Activated T-helper 2 cell treated with anti-CD3 and anti-CD28 coated beads, Interferon-gamma antibody, Interleukin-2, Interleukin-4, amounts not matched to agents 10 μg/mL and 5 μg/mL and 100 μg/mL, durations not matched to agents 14 hours and 24 hours and 36 hours (primary cell): ENCODE measurements at regions of chr3 and their contacts with region 1.

Region 1: GRCh38 chr3:32177702-32178198 is 60.7 kb upstream of the CMTM8 start:
- DNase-seq: peak; percentile 36
- H3K4me3 Mint-ChIP-seq: no peak overlapping the region
- H3K27ac Mint-ChIP-seq: no peak overlapping the region
- H3K4me1 Mint-ChIP-seq: peaks cover 15% of the 10 kb centered on the region
- H3K27me3 Mint-ChIP-seq: peaks cover 14% of the 10 kb centered on the region

Region 2: GRCh38 chr3:32026593-32026992 is 151.2 kb before region 1 on chr3:
- intact Hi-C with region 1: no loop called
- DNase-seq: no peak
- H3K4me3 Mint-ChIP-seq: no peak overlapping the region
- H3K27ac Mint-ChIP-seq: no peak overlapping the region
- H3K4me1 Mint-ChIP-seq: no peaks in the 10 kb centered on the region
- H3K27me3 Mint-ChIP-seq: peaks cover 9% of the 10 kb centered on the region

Region 3: DNA sequence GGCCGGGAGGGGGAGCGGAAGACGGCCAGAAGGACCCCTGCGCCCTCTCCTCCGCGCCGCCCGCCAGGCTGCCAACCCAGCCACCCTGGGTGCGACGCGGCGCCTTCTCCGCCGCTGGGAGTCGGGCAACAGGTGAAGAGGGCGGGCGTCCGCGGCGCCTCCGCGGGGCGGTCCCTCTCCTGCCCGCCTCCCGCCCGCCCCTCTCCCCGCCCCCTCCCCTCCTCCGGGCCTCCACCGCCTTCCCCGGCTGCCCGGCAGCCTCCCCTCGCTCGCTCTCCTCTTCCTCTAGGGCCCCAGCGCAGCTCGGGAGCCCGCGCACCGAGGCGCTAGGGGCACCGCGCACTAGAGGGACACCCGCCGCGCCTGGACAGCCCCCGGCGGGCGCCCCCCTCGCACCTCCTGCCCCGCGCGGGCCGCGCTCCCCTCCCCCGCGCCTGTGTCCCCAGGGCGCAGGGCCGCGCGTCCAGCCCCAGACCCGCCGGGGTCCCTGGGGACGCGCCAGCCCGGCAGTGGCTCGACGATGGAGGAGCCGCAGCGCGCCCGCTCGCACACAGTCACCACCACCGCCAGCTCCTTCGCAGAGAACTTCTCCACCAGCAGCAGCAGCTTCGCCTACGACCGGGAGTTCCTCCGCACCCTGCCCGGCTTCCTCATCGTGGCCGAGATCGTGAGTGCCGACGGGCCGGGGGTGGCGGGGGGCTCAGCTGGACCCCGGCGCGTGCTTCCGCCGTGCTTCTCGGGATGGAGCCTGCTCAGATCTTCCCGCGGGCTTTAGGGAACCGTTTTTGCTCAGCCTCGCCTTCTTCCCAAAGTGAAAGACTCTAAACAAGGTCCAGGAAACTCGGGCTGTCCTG is 60.9 kb after region 1 on chr3 and contains the start of gene CMTM8:
- intact Hi-C with region 1: loop called (anchors 2 kb)
- DNase-seq: peak; percentile 54
- H3K4me3 Mint-ChIP-seq: peak within 1 kb of the TSS; percentile 81
- H3K27ac Mint-ChIP-seq: peak within 1 kb of the TSS; percentile 26
- H3K4me1 Mint-ChIP-seq: peaks cover 19% of the 10 kb centered on the region
- H3K27me3 Mint-ChIP-seq: peaks cover 34% of the 10 kb centered on the region
- total RNA-seq, gene CMTM8: 3.6 TPM in 2 replicates

Region 4: GRCh38 chr3:32334675-32335074 is 156.9 kb after region 1 on chr3:
- intact Hi-C with region 1: loop called (anchors 1 kb)
- DNase-seq: peak; percentile 33
- H3K4me3 Mint-ChIP-seq: no peak overlapping the region
- H3K27ac Mint-ChIP-seq: no peak overlapping the region
- H3K4me1 Mint-ChIP-seq: peaks cover 24% of the 10 kb centered on the region
- H3K27me3 Mint-ChIP-seq: no peaks in the 10 kb centered on the region

Region 5: GRCh38 chr3:32401556-32402081 is 223.9 kb after region 1 on chr3:
- intact Hi-C with region 1: loop called (anchors 1 kb)
- DNase-seq: peak; percentile 51
- H3K4me3 Mint-ChIP-seq: peak overlapping the region; percentile 89
- H3K27ac Mint-ChIP-seq: peak overlapping the region; percentile 98
- H3K4me1 Mint-ChIP-seq: peaks cover 53% of the 10 kb centered on the region
- H3K27me3 Mint-ChIP-seq: no peaks in the 10 kb centered on the region

Region 6: DNA sequence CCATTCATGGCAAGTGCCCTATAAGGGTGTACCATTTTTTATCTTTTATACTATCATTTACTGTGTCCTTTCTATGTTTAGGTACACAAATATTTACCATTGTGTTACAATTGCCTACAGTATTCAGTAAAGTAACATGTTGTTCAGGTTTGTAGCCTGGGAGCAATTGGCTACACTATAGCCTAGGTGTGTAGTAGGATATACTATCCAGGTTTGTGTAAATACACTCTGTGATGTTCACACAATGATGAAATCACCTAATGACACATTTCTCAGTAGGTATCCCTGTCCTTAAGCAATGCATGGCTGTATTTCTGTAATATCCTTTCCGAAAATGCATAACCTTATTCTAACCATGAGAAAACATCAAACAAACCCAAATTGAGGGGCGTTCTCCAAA is 489.4 kb after region 1 on chr3:
- intact Hi-C with region 1: loop called (anchors 10 kb)
- DNase-seq: no peak
- H3K4me3 Mint-ChIP-seq: no peak overlapping the region
- H3K27ac Mint-ChIP-seq: no peak overlapping the region
- H3K4me1 Mint-ChIP-seq: no peaks in the 10 kb centered on the region
- H3K27me3 Mint-ChIP-seq: peaks cover 14% of the 10 kb centered on the region